ENCODE measurements at regions of chr5 and their contacts with region 1.

Region 1: GRCh38 chr5:54753034-54753433 is 232.4 kb downstream of the ESM1 start:
- DNase-seq: peak; percentile 53 to 66 (median 61)
- H3K4me3 ChIP-seq: peak overlapping the region in 1 of 3 experiments; percentile 30
- H3K4me3 Mint-ChIP-seq: peak overlapping the region in 1 of 2 donors; percentile 35
- H3K27ac ChIP-seq: peak overlapping the region in 1 of 2 donors; percentile 74
- H3K27ac Mint-ChIP-seq: peak overlapping the region; percentile 27 to 88 (median 71)
- H3K4me1 ChIP-seq: peaks cover 16 to 26% of the 10 kb centered on the region in 2 donors
- H3K4me1 Mint-ChIP-seq: peaks cover 33% of the 10 kb centered on the region
- H3K27me3 ChIP-seq: no peaks in the 10 kb centered on the region
- H3K27me3 Mint-ChIP-seq: peaks cover 0 to 2% (median 0%) of the 10 kb centered on the region in 3 donors
- CTCF ChIP-seq: no peak

Region 2: GRCh38 chr5:54785729-54786591 is 32.9 kb after region 1 on chr5:
- intact Hi-C with region 1: no loop called
- DNase-seq: peak; percentile 65 to 77 (median 74)
- H3K4me3 ChIP-seq: peak overlapping the region in 1 of 3 experiments; percentile 0
- H3K4me3 Mint-ChIP-seq: peak overlapping the region in 1 of 2 donors; percentile 53
- H3K27ac ChIP-seq: peak overlapping the region; percentile 54 to 56
- H3K27ac Mint-ChIP-seq: peak overlapping the region; percentile 78 to 92 (median 88)
- H3K4me1 ChIP-seq: peaks cover 20 to 22% of the 10 kb centered on the region in 2 donors
- H3K4me1 Mint-ChIP-seq: peaks cover 21% of the 10 kb centered on the region
- H3K27me3 ChIP-seq: no peaks in the 10 kb centered on the region
- H3K27me3 Mint-ChIP-seq: no peaks in the 10 kb centered on the region
- CTCF ChIP-seq: no peak

Region 3: GRCh38 chr5:54807421-54807820 is 54.4 kb after region 1 on chr5:
- intact Hi-C with region 1: no loop called
- DNase-seq: peak in 2 of 3 donors; percentile 3 to 45
- H3K4me3 ChIP-seq: no peak overlapping the region
- H3K4me3 Mint-ChIP-seq: no peak overlapping the region
- H3K27ac ChIP-seq: no peak overlapping the region
- H3K27ac Mint-ChIP-seq: no peak overlapping the region
- H3K4me1 ChIP-seq: peaks cover 0 to 3% of the 10 kb centered on the region in 2 donors
- H3K4me1 Mint-ChIP-seq: peaks cover 6% of the 10 kb centered on the region
- H3K27me3 ChIP-seq: no peaks in the 10 kb centered on the region
- H3K27me3 Mint-ChIP-seq: peaks cover 0 to 1% (median 0%) of the 10 kb centered on the region in 3 donors
- CTCF ChIP-seq: no peak

Region 4: DNA sequence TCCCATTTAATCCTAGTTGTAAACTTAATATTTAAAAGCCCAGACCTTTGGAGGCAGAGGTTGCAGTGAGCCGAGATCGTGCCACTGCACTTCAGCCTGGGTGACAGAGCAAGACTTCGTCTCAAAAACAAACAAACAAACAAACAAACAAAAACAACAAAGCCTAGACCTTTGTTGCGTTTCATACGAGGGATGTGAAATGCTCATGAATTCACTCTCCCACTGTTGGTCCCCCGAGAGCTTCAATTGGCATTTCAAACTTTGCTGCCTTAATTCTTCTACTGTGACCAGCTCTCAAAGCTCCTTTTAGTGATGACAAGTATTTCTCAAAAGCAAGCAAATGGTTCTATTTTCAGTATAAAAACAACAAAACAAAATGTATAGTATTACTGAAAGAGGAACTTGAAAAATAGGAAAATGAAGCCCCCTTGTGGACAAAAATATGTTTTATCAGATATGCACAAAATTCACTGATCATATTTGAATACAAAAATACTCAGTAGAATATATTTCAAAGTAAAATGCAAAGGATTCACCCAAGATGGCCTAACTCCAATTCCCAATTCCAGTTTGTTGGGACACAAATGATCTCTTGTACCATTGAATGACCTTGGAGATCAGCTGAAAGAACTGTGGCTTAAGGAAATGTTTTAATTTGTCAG is 92.0 kb after region 1 on chr5:
- intact Hi-C with region 1: loop called in 1 of 2 experiments (anchors 10 kb)
- DNase-seq: peak; percentile 41 to 69 (median 51)
- H3K4me3 ChIP-seq: peak overlapping the region in 2 of 3 experiments; percentile 28 to 52
- H3K4me3 Mint-ChIP-seq: peak overlapping the region; percentile 20 to 79
- H3K27ac ChIP-seq: peak overlapping the region in 1 of 2 donors; percentile 73
- H3K27ac Mint-ChIP-seq: peak overlapping the region in 5 of 7 donors; percentile 48 to 90 (median 71)
- H3K4me1 ChIP-seq: peaks cover 4 to 10% of the 10 kb centered on the region in 2 donors
- H3K4me1 Mint-ChIP-seq: peaks cover 11% of the 10 kb centered on the region
- H3K27me3 ChIP-seq: no peaks in the 10 kb centered on the region
- H3K27me3 Mint-ChIP-seq: peaks cover 0 to 5% (median 3%) of the 10 kb centered on the region in 3 donors
- CTCF ChIP-seq: peak; percentile 77

Region 5: GRCh38 chr5:54956922-54957321 is 203.9 kb after region 1 on chr5:
- intact Hi-C with region 1: no loop called
- DNase-seq: no peak
- H3K4me3 ChIP-seq: no peak overlapping the region
- H3K4me3 Mint-ChIP-seq: no peak overlapping the region
- H3K27ac ChIP-seq: no peak overlapping the region
- H3K27ac Mint-ChIP-seq: no peak overlapping the region
- H3K4me1 ChIP-seq: no peaks in the 10 kb centered on the region
- H3K4me1 Mint-ChIP-seq: no peaks in the 10 kb centered on the region
- H3K27me3 ChIP-seq: peaks cover 0 to 2% of the 10 kb centered on the region in 2 donors
- H3K27me3 Mint-ChIP-seq: peaks cover 3 to 17% (median 7%) of the 10 kb centered on the region in 3 donors
- CTCF ChIP-seq: no peak